ENCODE measurements at regions of chr5 and their contacts with region 1.

Region 1: DNA sequence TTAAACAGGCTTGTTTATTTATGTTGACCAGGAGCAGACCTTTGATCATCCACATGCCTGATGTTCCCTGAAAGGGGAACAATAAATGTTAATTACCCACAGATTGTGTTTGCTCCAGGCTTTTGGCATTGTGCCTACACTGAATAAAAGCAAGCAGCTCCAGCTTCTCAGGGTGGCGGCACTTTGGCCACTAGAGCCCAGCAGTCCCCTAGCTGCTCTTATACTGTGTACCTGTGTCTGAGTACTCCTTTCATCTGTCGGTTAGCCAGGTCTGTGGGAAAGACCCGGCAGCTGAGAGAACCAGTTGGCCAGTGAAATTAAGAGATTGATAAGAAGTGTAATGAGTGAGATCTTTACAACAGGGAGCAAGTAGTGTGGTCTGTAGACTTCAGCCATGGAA is 254.8 kb upstream of the FTMT start:
- DNase-seq: no peak
- H3K4me3 Mint-ChIP-seq: no peak overlapping the region
- H3K27ac Mint-ChIP-seq: no peak overlapping the region
- H3K4me1 Mint-ChIP-seq: no peaks in the 10 kb centered on the region
- H3K27me3 Mint-ChIP-seq: no peaks in the 10 kb centered on the region
- CTCF ChIP-seq: no peak

Region 2: DNA sequence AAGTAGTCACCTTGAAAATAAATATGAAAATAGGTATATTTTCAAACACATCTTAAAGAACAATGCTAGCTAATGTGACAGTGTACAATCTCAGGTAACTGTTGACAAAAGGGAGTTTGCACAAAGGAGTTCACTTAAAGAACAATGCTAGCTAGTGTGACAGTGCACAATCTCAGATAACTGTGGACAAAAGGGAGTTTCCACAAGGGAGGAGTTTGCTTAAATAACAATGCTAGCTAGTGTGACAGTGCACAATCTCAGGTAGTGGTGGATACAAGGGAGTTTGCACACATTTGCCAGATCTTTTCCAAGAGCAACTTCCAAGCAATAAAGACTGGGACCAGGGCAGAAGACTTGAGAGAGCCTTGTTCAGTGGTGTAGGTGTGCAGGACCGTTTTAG is 188.1 kb before region 1 on chr5:
- CTCF ChIA-PET with region 1: no interaction called
- intact Hi-C with region 1: no loop called
- DNase-seq: no peak
- H3K4me3 Mint-ChIP-seq: no peak overlapping the region
- H3K27ac Mint-ChIP-seq: no peak overlapping the region
- H3K4me1 Mint-ChIP-seq: peaks cover 11% of the 10 kb centered on the region
- H3K27me3 Mint-ChIP-seq: no peaks in the 10 kb centered on the region
- CTCF ChIP-seq: no peak

Region 3: DNA sequence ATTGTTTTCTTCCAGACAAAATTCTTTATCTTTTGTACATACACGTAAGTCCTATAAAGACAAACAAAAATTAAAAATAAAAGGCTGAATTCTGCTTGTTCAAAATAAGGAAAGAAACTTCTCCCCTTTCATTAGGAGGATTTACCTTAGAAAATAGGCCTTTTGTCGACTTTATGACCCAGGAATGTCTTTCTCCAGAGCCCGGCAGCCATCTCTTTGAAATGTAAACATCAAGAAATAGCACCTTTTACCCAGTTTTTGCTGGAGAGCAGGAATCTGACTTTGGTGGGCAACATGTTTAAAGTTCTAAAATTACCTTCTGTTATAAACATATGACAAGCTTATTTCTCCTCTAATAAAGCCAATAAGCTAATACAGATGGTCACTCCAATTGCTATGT is 118.2 kb before region 1 on chr5:
- CTCF ChIA-PET with region 1: interaction called, 12 read pairs
- intact Hi-C with region 1: no loop called
- DNase-seq: no peak
- H3K4me3 Mint-ChIP-seq: no peak overlapping the region
- H3K27ac Mint-ChIP-seq: no peak overlapping the region
- H3K4me1 Mint-ChIP-seq: no peaks in the 10 kb centered on the region
- H3K27me3 Mint-ChIP-seq: no peaks in the 10 kb centered on the region
- CTCF ChIP-seq: no peak

Measured in Calu3 (cell line).